Adrenal gland (tissue), 19 donors: ENCODE measurements at regions of chr17 and their contacts with region 1.

Region 1: GRCh38 chr17:81101614-81102306 is 63.5 kb upstream of the PVALEF start:
- DNase-seq: peak; percentile 80 to 90 (median 85)
- H3K4me3 ChIP-seq: no peak overlapping the region
- H3K27ac ChIP-seq: no peak overlapping the region
- H3K4me1 ChIP-seq: peaks cover 12 to 13% of the 10 kb centered on the region in 2 donors
- H3K27me3 ChIP-seq: no peaks in the 10 kb centered on the region
- CTCF ChIP-seq: peak; percentile 99 to 100 (median 100)
- POLR2A ChIP-seq: no peak

Region 2: GRCh38 chr17:80981062-80981902 is 120.5 kb before region 1 on chr17:
- intact Hi-C with region 1: loop called in 1 of 2 experiments (anchors 5 kb)
- DNase-seq: no peak
- H3K4me3 ChIP-seq: no peak overlapping the region
- H3K27ac ChIP-seq: no peak overlapping the region
- H3K4me1 ChIP-seq: peaks cover 4 to 8% of the 10 kb centered on the region in 2 donors
- H3K27me3 ChIP-seq: no peaks in the 10 kb centered on the region
- CTCF ChIP-seq: peak; percentile 8 to 88 (median 65)
- POLR2A ChIP-seq: no peak

Region 3: DNA sequence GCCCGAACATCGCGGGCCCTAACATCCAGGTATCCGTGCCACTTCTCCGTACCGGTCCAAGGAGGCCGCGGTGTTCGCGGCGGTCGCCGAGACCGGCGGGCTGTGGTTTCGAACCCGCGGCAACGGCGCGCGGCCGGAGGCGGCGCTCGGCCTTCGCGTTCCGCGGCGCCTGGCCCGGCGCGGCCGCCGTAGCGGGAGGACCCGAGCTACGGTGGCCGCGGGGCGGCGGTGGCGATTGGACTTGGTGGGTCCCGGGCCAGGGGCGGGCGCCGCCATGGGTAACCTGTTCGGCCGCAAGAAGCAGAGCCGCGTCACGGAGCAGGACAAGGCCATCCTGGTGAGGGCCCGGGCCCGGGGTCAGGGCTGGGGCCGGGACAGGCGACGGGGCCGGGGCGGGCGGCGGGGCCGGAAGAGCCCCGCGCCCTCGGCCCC is 110.1 kb before region 1 on chr17 and contains the start of gene CHMP6:
- intact Hi-C with region 1: loop called (anchors 5 kb)
- DNase-seq: peak; percentile 66 to 80 (median 77)
- H3K4me3 ChIP-seq: peak within 1 kb of the TSS; percentile 27 to 91 (median 70)
- H3K27ac ChIP-seq: peak within 1 kb of the TSS in 2 of 5 donors; percentile 26 to 30
- H3K4me1 ChIP-seq: peaks cover 0 to 24% of the 10 kb centered on the region in 2 donors
- H3K27me3 ChIP-seq: no peaks in the 10 kb centered on the region
- CTCF ChIP-seq: peak in 3 of 6 experiments; percentile 4 to 58 (median 41)
- POLR2A ChIP-seq: peak in 1 of 2 donors; percentile 26
- total RNA-seq, gene CHMP6: 7.8 to 35.3 (median 25.9) TPM

Region 4: GRCh38 chr17:81020767-81021497 is 80.8 kb before region 1 on chr17:
- intact Hi-C with region 1: loop called (anchors 2 to 5 kb)
- DNase-seq: peak in 5 of 7 donors; percentile 47 to 76 (median 58)
- H3K4me3 ChIP-seq: no peak overlapping the region
- H3K27ac ChIP-seq: peak overlapping the region in 2 of 5 donors; percentile 30 to 73
- H3K4me1 ChIP-seq: peaks cover 5 to 18% of the 10 kb centered on the region in 2 donors
- H3K27me3 ChIP-seq: no peaks in the 10 kb centered on the region
- CTCF ChIP-seq: no peak
- POLR2A ChIP-seq: no peak